ENCODE measurements at regions of chr5 and their contacts with region 1.

Region 1: GRCh38 chr5:177446200-177447065 is at the start of gene PRR7:
- DNase-seq: no peak
- H3K4me3 ChIP-seq: peak within 1 kb of the TSS; percentile 73
- H3K27ac ChIP-seq: peak within 1 kb of the TSS; percentile 39
- H3K27me3 ChIP-seq: no peaks in the 10 kb centered on the region
- CTCF ChIP-seq: no peak
- polyA plus RNA-seq, gene PRR7: 1.0 and 1.6 TPM in 2 replicates

Region 2: DNA sequence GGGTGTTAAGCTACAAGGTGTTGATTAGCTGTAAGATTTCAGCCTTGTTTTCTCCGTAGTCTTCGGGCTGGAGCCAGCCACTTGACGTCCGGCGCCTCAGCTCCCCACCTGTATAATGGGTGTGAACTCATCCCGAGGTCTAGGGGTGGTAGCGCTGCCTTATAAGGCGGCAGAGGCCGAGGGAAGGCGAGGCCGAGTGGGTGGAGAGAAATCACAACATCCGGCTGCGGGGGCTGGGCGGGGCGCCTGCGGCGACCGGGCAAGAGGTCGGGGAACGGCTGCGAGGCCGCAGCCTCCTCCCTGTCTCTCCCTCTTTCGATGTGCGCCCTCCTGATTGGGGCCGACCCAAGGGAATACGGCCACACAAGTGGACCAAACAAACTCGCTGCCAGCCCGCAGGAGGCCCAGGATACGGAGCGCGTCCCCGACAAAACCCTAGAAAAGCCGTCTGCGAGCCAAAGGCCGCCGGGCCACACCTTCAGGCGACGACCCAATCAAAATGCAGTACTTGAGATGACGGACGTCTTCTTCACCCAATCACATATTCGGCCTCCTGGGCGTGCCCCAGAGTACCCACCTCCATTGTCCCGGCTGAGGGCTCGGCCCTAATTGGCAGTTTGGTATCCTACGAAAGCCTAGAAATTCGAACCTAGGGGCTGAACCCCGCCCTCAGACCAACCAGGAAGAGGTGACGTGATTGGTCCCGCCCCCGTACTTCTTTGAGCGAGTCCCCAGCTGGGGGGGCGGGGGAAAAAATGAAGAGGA is 20.4 kb before region 1 on chr5:
- CTCF ChIA-PET with region 1: interaction called, 4 read pairs
- POLR2A ChIA-PET with region 1: interaction called, 15 read pairs
- DNase-seq: peak; percentile 100
- H3K4me3 ChIP-seq: peak overlapping the region; percentile 70
- H3K27ac ChIP-seq: peak overlapping the region; percentile 96
- H3K27me3 ChIP-seq: no peaks in the 10 kb centered on the region
- CTCF ChIP-seq: no peak

Region 3: DNA sequence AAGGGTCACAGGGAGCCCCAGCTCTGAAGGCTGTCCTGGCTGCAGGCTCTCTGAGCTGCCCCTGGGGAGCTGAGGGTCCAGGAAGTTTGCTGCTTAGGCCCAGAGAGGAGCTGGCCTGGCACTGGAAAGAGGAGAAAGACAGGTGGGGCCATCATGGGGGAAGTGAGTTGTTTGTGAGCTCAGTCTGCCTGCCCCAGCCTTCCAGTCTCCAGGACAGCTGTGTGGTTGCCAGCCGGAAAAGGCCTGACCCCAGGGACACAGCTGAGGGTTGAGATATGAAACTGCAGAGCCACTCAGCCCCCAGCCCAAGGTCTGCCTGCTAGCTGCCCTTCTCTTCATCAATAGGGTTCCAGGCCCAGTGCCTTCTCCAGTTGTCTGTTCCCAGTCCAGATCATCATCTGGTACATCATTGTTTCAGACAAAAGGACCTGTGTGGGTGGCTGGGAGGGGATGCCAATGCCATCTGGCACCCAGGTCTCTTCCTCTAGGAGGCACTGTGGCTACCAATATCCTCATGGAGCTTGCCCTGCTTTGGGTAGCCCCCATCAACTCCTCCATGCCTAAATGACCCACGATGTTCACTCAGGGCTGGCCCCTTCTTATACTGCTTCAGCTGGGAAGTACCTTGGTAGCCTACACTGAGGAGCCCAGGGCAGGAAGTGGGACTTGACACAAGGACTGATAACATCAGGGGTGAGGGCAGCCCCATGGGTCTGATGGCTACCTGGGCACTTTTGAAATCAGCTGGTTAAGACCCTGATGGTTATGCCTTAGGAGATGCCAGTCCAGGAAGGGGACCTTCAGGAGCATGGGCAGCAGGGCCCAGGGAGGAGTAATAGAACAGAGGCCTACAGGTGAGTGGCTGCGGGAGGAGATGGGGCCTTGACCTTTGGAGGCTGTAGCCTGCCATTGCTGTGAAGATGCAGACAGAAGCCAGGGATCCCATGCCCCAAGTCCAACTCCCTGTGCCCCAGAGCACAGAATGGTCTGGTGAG is 74.8 kb after region 1 on chr5:
- CTCF ChIA-PET with region 1: no interaction called
- POLR2A ChIA-PET with region 1: no interaction called
- DNase-seq: no peak
- H3K4me3 ChIP-seq: no peak overlapping the region
- H3K27ac ChIP-seq: peak overlapping the region; percentile 2
- H3K27me3 ChIP-seq: no peaks in the 10 kb centered on the region
- CTCF ChIP-seq: peak; percentile 20